ENCODE measurements at regions of chr6 and their contacts with region 1.

Region 1: GRCh38 chr6:47663462-47664216 is 34.7 kb upstream of the ADGRF4 start:
- DNase-seq: no peak
- H3K4me3 ChIP-seq: no peak overlapping the region
- H3K27ac ChIP-seq: no peak overlapping the region
- H3K4me1 ChIP-seq: no peaks in the 10 kb centered on the region
- H3K27me3 ChIP-seq: no peaks in the 10 kb centered on the region
- CTCF ChIP-seq: no peak

Region 2: GRCh38 chr6:47252633-47253032 is 411.0 kb before region 1 on chr6:
- CTCF ChIA-PET with region 1: no interaction called
- POLR2A ChIA-PET with region 1: no interaction called
- intact Hi-C with region 1: no loop called
- DNase-seq: no peak
- H3K4me3 ChIP-seq: no peak overlapping the region
- H3K27ac ChIP-seq: no peak overlapping the region
- H3K4me1 ChIP-seq: peaks cover 12% of the 10 kb centered on the region
- H3K27me3 ChIP-seq: no peaks in the 10 kb centered on the region
- CTCF ChIP-seq: no peak

Region 3: DNA sequence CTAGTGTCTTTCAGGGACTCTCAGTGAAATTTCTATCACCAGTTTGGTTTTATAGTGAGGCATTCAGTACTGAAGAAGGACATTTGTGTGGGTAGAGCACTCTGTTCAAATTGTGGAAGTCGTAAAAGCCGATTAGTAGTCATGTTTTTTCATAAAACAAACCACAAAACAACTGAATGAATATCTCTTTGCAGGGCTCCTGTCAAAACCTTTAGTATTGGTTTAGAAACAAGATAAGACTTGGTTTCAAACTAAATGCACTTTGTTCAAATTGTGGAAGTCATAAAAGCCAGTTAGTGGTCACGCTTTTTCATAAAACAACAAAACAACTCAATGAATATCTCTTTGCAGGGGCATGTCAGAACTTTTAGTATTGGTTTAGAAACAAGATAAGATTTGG is 58.6 kb after region 1 on chr6:
- CTCF ChIA-PET with region 1: no interaction called
- POLR2A ChIA-PET with region 1: interaction called, 14 read pairs
- intact Hi-C with region 1: no loop called
- DNase-seq: peak; percentile 57
- H3K4me3 ChIP-seq: no peak overlapping the region
- H3K27ac ChIP-seq: no peak overlapping the region
- H3K4me1 ChIP-seq: peaks cover 21% of the 10 kb centered on the region
- H3K27me3 ChIP-seq: no peaks in the 10 kb centered on the region
- CTCF ChIP-seq: no peak

Measured in A673 (cell line).